ENCODE measurements at regions of chr4 and their contacts with region 1.

Region 1: GRCh38 chr4:82629238-82630000 is 67.6 kb upstream of the TMEM150C start:
- DNase-seq: no peak
- H3K4me3 ChIP-seq: no peak overlapping the region
- H3K27ac ChIP-seq: no peak overlapping the region
- H3K4me1 ChIP-seq: no peaks in the 10 kb centered on the region
- H3K27me3 ChIP-seq: no peaks in the 10 kb centered on the region
- CTCF ChIP-seq: no peak

Region 2: DNA sequence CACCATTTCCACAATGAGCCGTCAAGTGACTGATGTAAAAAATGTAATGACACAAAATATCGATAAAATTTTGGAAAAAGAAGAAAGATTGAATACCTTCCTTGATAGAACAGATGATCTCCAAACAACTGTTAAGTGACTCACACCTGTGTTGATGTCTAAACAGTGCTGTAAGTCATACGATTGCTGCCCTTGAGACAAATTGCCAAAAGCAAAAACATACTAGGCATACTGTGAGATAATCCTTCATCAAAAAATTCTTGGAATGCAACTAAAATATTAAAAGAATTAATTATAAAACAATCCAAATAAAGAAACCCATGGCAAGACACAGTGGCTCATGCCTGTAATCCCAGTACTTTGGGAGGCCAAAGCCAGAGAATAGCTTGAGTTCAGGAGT is 309.1 kb before region 1 on chr4:
- intact Hi-C with region 1: loop called (anchors 10 kb)
- DNase-seq: no peak
- H3K4me3 ChIP-seq: no peak overlapping the region
- H3K27ac ChIP-seq: no peak overlapping the region
- H3K4me1 ChIP-seq: no peaks in the 10 kb centered on the region
- H3K27me3 ChIP-seq: no peaks in the 10 kb centered on the region
- CTCF ChIP-seq: no peak

Region 3: GRCh38 chr4:82745173-82745842 is 115.9 kb after region 1 on chr4:
- intact Hi-C with region 1: no loop called
- DNase-seq: no peak
- H3K4me3 ChIP-seq: no peak overlapping the region
- H3K27ac ChIP-seq: peak overlapping the region; percentile 40 to 83
- H3K4me1 ChIP-seq: peaks cover 8 to 38% (median 11%) of the 10 kb centered on the region in 3 donors
- H3K27me3 ChIP-seq: no peaks in the 10 kb centered on the region
- CTCF ChIP-seq: no peak

Region 4: GRCh38 chr4:82842593-82842992 is 213.2 kb after region 1 on chr4:
- intact Hi-C with region 1: no loop called
- DNase-seq: peak in 1 of 5 donors; percentile 9
- H3K4me3 ChIP-seq: no peak overlapping the region
- H3K27ac ChIP-seq: no peak overlapping the region
- H3K4me1 ChIP-seq: no peaks in the 10 kb centered on the region
- H3K27me3 ChIP-seq: no peaks in the 10 kb centered on the region
- CTCF ChIP-seq: no peak

Measured in kidney (tissue), 22 donors.